ENCODE measurements at regions of chr1 and their contacts with region 1.

Region 1: DNA sequence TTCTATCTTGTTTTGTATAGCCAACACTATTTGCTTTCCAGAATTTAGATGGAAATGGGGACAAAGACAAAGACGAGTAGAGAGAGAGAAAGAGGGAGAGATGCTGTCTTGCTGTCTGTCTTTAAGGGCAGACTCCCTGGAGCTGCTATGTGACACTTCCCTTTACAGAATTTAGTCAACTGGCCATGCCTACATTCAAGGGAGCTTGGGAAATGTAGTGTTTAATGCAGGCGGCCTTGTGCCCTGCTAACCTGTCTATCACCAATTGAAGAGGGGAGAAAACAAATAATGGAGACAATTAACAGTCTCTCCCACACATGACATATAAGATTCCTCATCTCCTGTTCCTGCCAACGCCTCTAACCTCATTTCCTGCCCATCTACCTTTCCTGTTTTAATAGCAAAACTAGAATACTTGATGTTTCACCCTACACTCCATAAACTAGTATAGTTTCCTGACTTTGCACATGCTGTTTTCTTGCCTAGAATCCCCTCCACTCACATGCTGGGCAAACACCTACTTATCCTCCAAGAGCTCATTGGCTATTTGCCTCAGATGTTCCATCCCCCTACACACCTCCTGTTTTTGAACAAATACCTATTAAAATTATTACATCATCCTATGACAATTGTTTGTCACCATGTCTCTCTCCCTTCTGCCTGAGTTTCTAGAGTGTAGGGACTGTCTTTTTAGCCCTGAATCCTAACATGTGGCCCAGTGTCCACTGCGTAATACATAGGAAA is 117.2 kb downstream of the SLC25A24 start:
- DNase-seq: peak in 2 of 3 donors; percentile 37 to 47
- H3K4me3 ChIP-seq: no peak overlapping the region
- H3K27ac ChIP-seq: no peak overlapping the region
- H3K4me1 ChIP-seq: peaks cover 25 to 56% (median 45%) of the 10 kb centered on the region in 4 experiments
- H3K27me3 ChIP-seq: no peaks in the 10 kb centered on the region

Region 2: GRCh38 chr1:108043707-108044287 is 39.1 kb before region 1 on chr1:
- CTCF ChIA-PET with region 1: interaction called, 17 read pairs
- POLR2A ChIA-PET with region 1: no interaction called
- DNase-seq: peak; percentile 85 to 97 (median 95)
- H3K4me3 ChIP-seq: no peak overlapping the region
- H3K27ac ChIP-seq: no peak overlapping the region
- H3K4me1 ChIP-seq: peaks cover 12 to 73% (median 43%) of the 10 kb centered on the region in 4 experiments
- H3K27me3 ChIP-seq: no peaks in the 10 kb centered on the region